Activated T-helper 1 cell treated with anti-CD3 and anti-CD28 coated beads, Interleukin-12 subunit alpha, Interleukin-12 subunit beta, Interleukin-2, Interleukin-4 antibody, amounts not matched to agents 30 ng/mL and 10 ng/mL and 1 ng/mL, durations not matched to agents 14 hours and 24 hours and 36 hours (primary cell): ENCODE measurements at regions of chr18 and their contacts with region 1.

Region 1: DNA sequence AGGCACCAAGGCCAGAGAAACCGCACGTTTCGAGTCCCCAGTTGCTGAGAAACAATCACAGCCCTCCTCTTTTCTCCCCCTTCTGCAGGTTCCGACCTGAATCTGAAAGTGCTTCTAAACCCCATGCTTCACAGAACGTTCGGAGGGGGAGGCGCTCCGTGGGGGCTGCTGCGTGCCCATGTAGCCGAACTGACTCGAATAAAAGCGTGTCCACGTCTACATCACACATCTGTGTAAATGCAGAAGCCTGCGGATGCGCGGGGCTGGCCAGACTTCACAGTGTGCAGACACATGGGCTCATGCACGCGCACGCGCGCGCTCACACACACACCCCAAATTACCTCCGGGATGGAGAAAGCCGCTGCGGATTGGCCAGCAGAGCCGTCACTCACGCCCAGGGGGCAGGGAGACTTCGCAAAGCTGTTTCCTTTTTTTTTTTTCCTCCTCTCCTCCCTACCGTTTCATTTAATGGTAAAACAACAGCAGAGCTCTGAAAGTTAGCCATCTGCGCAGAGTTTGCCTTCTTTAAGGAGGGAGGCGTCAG is 2.3 kb downstream of the ZNF516 start:
- DNase-seq: peak; percentile 97
- H3K4me3 Mint-ChIP-seq: peak overlapping the region; percentile 96
- H3K27ac Mint-ChIP-seq: peak overlapping the region; percentile 81
- H3K4me1 Mint-ChIP-seq: peaks cover 37% of the 10 kb centered on the region
- H3K27me3 Mint-ChIP-seq: peaks cover 75% of the 10 kb centered on the region

Region 2: GRCh38 chr18:74597662-74598349 is 1894.9 kb before region 1 on chr18 and contains the start of gene ZNF407:
- intact Hi-C with region 1: loop called (anchors 2 kb)
- DNase-seq: peak; percentile 83
- H3K4me3 Mint-ChIP-seq: peak within 1 kb of the TSS; percentile 97
- H3K27ac Mint-ChIP-seq: peak within 1 kb of the TSS; percentile 96
- H3K4me1 Mint-ChIP-seq: peaks cover 45% of the 10 kb centered on the region
- H3K27me3 Mint-ChIP-seq: no peaks in the 10 kb centered on the region
- total RNA-seq, gene ZNF407: 19.8 and 21.4 TPM in 2 replicates

Region 3: DNA sequence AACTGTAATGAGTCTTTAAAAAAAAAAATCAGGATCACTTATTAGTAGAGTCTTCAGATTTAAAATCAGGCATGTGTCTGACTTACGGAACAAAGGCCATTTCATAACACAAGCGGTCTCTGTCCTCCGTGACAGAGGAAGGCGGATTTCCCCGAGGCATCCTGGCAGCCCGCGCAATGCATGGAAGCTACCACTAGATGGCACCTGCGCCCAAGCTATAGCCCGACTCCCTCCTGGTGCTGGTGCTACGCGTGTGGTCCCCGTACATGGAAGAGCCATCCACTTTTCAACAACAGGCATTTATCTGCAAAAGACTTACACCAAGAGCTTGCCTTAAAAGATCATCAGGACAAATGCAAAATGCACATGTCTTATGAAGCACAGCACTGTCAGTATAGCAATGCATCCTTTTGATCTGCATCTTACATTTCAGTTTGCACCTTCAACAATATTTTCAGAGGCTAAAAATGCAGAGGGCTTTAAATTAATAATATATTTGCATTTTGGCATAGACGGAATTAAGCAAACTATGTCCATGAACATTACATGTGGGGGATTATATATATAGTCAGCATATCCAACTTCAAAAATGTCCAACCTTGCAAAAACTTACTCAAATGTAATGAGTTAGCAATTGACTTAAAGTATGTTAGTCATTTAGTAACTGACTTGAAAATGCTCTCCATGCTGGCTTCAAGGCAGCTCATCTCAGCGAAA is 93.7 kb before region 1 on chr18:
- intact Hi-C with region 1: loop called (anchors 2 kb)
- DNase-seq: peak; percentile 61
- H3K4me3 Mint-ChIP-seq: no peak overlapping the region
- H3K27ac Mint-ChIP-seq: no peak overlapping the region
- H3K4me1 Mint-ChIP-seq: peaks cover 6% of the 10 kb centered on the region
- H3K27me3 Mint-ChIP-seq: peaks cover 18% of the 10 kb centered on the region

Region 4: DNA sequence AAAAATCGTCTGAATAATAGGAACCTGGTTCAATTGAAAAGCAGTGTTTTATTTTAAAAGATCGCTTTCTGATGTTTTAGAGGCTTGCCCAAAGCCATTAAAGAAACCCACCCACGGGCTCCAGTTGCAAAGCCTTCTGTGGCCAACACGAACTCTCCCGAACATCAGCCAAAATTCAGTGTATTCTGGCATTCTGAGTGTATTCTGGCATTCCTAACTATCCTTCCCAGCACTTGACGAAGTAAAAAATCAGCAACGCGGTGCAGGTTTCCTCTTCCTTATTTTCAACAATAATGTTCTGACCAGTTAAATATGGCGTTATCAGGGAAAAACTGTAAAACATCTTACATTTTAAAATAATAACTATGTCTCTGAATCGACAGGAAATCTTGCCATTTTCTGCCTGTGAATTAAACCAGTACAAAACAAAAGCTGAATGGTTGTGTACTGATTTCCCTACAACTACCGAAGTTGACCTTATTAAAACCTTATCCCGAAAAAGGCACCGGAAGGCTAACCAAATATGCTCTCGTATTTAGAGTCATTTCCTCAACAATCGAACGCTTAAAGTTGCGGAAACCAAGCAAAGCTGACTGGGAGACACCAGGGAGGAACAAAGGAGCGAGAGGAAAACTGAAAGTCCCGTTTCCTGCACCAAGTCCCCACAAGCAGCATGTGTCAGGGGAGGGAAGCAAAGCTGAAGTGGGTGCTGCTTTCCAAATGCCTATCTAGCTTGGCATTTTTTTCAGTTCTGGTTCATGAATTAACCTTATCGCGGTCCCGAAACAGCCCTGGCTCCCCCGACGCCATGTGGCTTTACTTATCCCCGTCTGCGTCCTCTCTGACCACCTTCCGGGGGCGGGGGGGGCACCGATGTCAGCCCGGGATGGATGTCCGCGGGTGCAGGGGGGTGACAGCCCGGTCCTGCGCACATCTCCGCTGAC is 42.0 kb before region 1 on chr18:
- intact Hi-C with region 1: loop called (anchors 1 kb)
- DNase-seq: no peak
- H3K4me3 Mint-ChIP-seq: peak overlapping the region; percentile 80
- H3K27ac Mint-ChIP-seq: no peak overlapping the region
- H3K4me1 Mint-ChIP-seq: peaks cover 16% of the 10 kb centered on the region
- H3K27me3 Mint-ChIP-seq: peaks cover 39% of the 10 kb centered on the region

Region 5: GRCh38 chr18:76528477-76529432 is 36.0 kb after region 1 on chr18:
- intact Hi-C with region 1: no loop called
- DNase-seq: no peak
- H3K4me3 Mint-ChIP-seq: no peak overlapping the region
- H3K27ac Mint-ChIP-seq: no peak overlapping the region
- H3K4me1 Mint-ChIP-seq: peaks cover 7% of the 10 kb centered on the region
- H3K27me3 Mint-ChIP-seq: peaks cover 27% of the 10 kb centered on the region

Region 6: GRCh38 chr18:76822510-76823160 is 329.9 kb after region 1 on chr18 and contains the start of gene ZNF236:
- intact Hi-C with region 1: loop called (anchors 2 kb)
- DNase-seq: peak; percentile 59
- H3K4me3 Mint-ChIP-seq: peak within 1 kb of the TSS; percentile 93
- H3K27ac Mint-ChIP-seq: peak within 1 kb of the TSS; percentile 96
- H3K4me1 Mint-ChIP-seq: peaks cover 41% of the 10 kb centered on the region
- H3K27me3 Mint-ChIP-seq: no peaks in the 10 kb centered on the region
- total RNA-seq, gene ZNF236: 18.0 and 21.5 TPM in 2 replicates